SK-N-SH (cell line): ENCODE measurements at regions of chr5 and their contacts with region 1.

Region 1: DNA sequence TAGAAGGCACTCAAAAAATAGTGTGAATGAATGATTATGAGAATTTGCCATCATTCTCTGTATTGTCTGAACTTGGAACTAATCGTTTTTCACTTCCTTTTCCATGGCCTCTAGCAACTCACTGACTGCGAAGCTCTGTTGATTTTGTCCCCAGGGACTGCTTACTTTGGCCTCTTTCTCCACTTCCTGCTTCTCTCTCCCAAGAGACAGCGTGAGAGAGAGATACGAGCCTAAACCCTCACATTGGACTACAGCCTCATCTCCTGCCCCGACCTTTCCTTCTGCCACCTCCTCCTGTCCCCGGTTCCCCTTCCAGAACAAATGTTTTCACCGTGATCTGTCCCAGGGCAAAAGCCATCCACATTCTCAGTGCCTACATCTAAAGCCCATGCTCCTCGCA is 300.8 kb upstream of the PANK3 start:
- DNase-seq: no peak
- H3K4me3 ChIP-seq: peak overlapping the region in 1 of 2 experiments; percentile 45; a peak in 2 of 4 replicates
- H3K27ac ChIP-seq: peak overlapping the region; percentile 58 to 100; a peak in 3 of 4 replicates
- H3K4me1 ChIP-seq: peaks cover 12 to 68% of the 10 kb centered on the region in 2 experiments; a peak in 3 of 4 replicates
- H3K27me3 ChIP-seq: no peaks in the 10 kb centered on the region
- CTCF ChIP-seq: no peak
- EP300 ChIP-seq: no peak
- RAD21 ChIP-seq: no peak

Region 2: DNA sequence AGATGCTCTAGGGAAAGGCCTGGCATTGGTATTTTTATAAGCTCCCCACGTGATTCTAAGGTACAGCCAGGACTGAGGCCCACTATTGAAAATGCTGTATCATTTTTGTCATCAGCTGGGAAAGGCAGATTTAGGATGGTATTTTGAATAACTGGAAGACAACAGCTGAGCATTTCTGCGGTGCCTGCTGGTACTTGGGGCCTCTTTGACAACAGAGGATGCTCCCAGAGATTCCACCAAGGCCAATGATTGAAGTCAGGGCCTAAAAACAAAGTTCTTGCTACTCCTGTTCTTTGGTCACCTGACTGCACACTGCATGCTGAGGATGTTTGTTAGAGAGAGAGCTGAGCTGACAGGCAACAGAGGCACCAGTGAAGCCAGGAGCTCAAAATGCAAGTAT is 342.8 kb before region 1 on chr5:
- CTCF ChIA-PET with region 1: no interaction called
- POLR2A ChIA-PET with region 1: no interaction called
- DNase-seq: no peak
- H3K4me3 ChIP-seq: no peak overlapping the region
- H3K27ac ChIP-seq: no peak overlapping the region
- H3K4me1 ChIP-seq: peaks cover 0 to 2% of the 10 kb centered on the region in 2 experiments; a peak in 1 of 4 replicates
- H3K27me3 ChIP-seq: no peaks in the 10 kb centered on the region
- CTCF ChIP-seq: no peak
- EP300 ChIP-seq: no peak
- RAD21 ChIP-seq: no peak

Region 3: DNA sequence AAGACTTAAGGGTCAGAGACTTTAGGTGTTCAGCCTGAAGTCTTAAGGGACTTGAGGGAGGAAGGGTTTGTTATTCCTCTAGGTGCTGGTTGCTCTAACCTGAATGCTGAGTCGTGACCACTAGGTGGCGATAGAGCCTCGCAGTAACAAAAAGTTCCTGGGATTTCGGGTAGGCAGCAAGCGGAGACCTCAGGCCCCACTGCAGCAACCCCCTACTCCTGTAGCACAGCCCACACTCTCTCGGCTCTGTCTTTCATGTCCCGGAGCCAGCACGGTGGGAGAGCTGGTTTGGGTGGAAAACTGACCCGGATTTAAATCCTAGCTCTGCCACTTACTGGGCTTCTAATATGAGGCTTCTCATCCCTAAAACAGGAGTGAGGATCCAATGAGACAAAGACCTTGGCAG is 200.4 kb before region 1 on chr5:
- CTCF ChIA-PET with region 1: no interaction called
- POLR2A ChIA-PET with region 1: no interaction called
- DNase-seq: peak; percentile 82
- H3K4me3 ChIP-seq: no peak overlapping the region
- H3K27ac ChIP-seq: peak overlapping the region in 1 of 2 experiments; percentile 44; a peak in 2 of 4 replicates
- H3K4me1 ChIP-seq: peaks cover 0 to 18% of the 10 kb centered on the region in 2 experiments; a peak in 1 of 4 replicates
- H3K27me3 ChIP-seq: no peaks in the 10 kb centered on the region
- CTCF ChIP-seq: peak; percentile 92
- EP300 ChIP-seq: no peak
- RAD21 ChIP-seq: peak; percentile 78

Region 4: DNA sequence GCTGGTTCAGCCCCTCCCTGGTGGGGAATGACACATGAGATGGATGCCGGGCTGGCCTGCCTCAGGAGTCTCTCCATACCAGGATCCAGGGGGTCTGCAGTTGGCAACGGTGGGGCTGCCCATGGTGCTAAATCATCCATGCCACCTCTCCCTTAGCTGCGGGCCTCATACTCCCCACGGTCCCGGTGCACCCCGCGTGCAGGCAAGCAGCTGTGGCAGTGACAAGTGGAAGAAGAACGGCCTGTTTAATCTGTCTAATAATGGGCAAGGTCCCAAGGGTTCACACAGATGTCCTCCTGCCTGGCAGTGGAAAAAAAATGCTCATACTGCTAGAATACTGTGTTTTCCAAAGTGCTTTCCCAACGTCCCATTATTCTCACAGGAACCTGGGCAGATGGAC is 103.9 kb before region 1 on chr5:
- CTCF ChIA-PET with region 1: interaction called, 12 read pairs
- POLR2A ChIA-PET with region 1: interaction called, 14 read pairs
- DNase-seq: no peak
- H3K4me3 ChIP-seq: no peak overlapping the region
- H3K27ac ChIP-seq: peak overlapping the region in 1 of 2 experiments; percentile 100; a peak in 2 of 4 replicates
- H3K4me1 ChIP-seq: peaks cover 0 to 92% of the 10 kb centered on the region in 2 experiments; a peak in 2 of 4 replicates
- H3K27me3 ChIP-seq: no peaks in the 10 kb centered on the region
- CTCF ChIP-seq: no peak
- EP300 ChIP-seq: no peak
- RAD21 ChIP-seq: no peak

Region 5: GRCh38 chr5:168836603-168837231 is 43.2 kb before region 1 on chr5:
- CTCF ChIA-PET with region 1: interaction called, 45 read pairs
- POLR2A ChIA-PET with region 1: interaction called, 190 read pairs
- DNase-seq: no peak
- H3K4me3 ChIP-seq: peak overlapping the region in 1 of 2 experiments; percentile 25; a peak in 1 of 4 replicates
- H3K27ac ChIP-seq: peak overlapping the region in 1 of 2 experiments; percentile 96; a peak in 2 of 4 replicates
- H3K4me1 ChIP-seq: peaks cover 0 to 60% of the 10 kb centered on the region in 2 experiments; a peak in 2 of 4 replicates
- H3K27me3 ChIP-seq: no peaks in the 10 kb centered on the region
- CTCF ChIP-seq: no peak
- EP300 ChIP-seq: no peak
- RAD21 ChIP-seq: no peak

Region 6: GRCh38 chr5:168916266-168916665 is 36.3 kb after region 1 on chr5:
- CTCF ChIA-PET with region 1: interaction called, 6 read pairs
- POLR2A ChIA-PET with region 1: interaction called, 67 read pairs
- DNase-seq: peak; percentile 74
- H3K4me3 ChIP-seq: no peak overlapping the region
- H3K27ac ChIP-seq: peak overlapping the region; percentile 27 to 99
- H3K4me1 ChIP-seq: peaks cover 5 to 54% of the 10 kb centered on the region in 2 experiments; a peak in 3 of 4 replicates
- H3K27me3 ChIP-seq: no peaks in the 10 kb centered on the region
- CTCF ChIP-seq: no peak
- EP300 ChIP-seq: peak in 1 of 2 experiments; percentile 96; a peak in 3 of 4 replicates
- RAD21 ChIP-seq: no peak; the same call in 1 of the 2 replicates

Region 7: GRCh38 chr5:168941901-168942300 is 62.0 kb after region 1 on chr5:
- CTCF ChIA-PET with region 1: interaction called, 47 read pairs
- POLR2A ChIA-PET with region 1: interaction called, 99 read pairs
- DNase-seq: peak; percentile 44
- H3K4me3 ChIP-seq: no peak overlapping the region
- H3K27ac ChIP-seq: peak overlapping the region in 1 of 2 experiments; percentile 98; a peak in 2 of 4 replicates
- H3K4me1 ChIP-seq: peaks cover 0 to 66% of the 10 kb centered on the region in 2 experiments; a peak in 2 of 4 replicates
- H3K27me3 ChIP-seq: no peaks in the 10 kb centered on the region
- CTCF ChIP-seq: no peak
- EP300 ChIP-seq: no peak
- RAD21 ChIP-seq: no peak

Region 8: DNA sequence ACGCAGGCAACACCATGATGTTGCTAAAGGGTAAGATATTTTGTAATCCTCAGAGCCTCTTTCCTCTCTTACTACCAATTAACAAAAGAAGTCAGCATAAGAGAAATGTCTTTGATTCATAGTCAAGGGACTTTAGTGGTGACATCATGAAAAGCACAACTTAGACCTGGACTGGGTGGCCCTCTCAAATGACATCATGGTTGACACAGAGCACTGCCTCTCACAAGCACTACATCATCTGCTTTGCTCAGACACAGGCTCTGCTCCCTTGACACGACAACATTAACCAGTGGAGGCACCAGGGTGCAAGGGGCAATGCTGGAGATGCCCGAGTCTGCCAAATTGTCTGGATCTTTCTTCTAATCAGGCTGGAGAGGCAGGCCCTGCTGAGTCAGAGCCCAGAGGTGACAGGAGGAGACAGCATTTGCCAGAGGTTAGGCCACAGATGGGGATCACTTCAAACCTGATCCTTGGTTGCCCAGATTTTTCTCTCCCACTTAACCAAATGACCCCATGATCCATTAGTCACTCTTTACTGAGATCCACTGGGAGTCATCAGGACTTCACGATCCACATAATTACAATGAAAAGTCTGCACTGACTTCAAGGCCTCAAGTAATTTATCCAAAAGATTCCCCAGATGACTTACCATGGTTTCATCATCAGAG is 246.6 kb after region 1 on chr5:
- CTCF ChIA-PET with region 1: no interaction called
- POLR2A ChIA-PET with region 1: no interaction called
- DNase-seq: no peak
- H3K4me3 ChIP-seq: no peak overlapping the region
- H3K27ac ChIP-seq: no peak overlapping the region
- H3K4me1 ChIP-seq: peaks cover 0 to 12% of the 10 kb centered on the region in 2 experiments; a peak in 1 of 4 replicates
- H3K27me3 ChIP-seq: no peaks in the 10 kb centered on the region
- CTCF ChIP-seq: no peak
- EP300 ChIP-seq: no peak
- RAD21 ChIP-seq: no peak